ENCODE measurements at regions of chr11 and their contacts with region 1.

Region 1: DNA sequence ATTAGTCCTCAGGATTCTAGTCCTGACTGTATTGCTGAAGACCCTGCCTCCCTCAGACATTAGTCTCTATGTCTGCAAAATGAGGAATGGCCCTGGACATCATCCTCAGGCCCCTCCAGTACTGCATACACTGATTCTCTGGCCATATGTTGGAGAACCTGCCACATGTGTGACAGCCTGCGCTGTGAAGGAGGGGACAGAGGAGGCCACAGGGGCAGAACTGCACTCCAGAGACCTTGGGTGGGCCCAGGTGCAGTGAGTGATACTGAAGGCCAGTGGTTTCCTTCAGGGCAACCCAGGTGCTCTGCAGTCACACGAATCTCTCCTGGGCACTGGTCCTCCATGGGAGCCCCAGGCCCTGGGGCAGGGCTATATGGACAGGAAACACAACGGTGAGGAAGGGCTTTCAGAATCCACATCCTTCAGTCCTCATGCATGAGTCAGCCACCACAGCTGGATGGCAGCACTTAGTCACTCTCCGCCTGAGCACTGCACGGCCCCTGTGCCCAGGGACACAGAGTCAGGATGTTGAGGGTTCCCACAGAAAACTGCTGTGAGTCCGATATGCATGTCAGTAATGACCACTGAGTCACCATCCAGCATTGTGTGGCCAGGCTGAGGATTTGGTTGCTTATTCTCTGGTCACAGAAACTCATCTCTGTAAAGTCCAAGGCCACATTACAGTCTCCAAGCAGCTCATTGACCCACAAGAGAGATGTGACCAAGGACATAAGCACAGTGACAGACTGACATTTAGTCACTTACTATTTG is 39.7 kb downstream of the ME3 start:
- DNase-seq: peak; percentile 61
- H3K4me3 Mint-ChIP-seq: no peak overlapping the region
- H3K27ac Mint-ChIP-seq: no peak overlapping the region
- H3K4me1 Mint-ChIP-seq: peaks cover 6% of the 10 kb centered on the region
- H3K27me3 Mint-ChIP-seq: no peaks in the 10 kb centered on the region

Region 2: DNA sequence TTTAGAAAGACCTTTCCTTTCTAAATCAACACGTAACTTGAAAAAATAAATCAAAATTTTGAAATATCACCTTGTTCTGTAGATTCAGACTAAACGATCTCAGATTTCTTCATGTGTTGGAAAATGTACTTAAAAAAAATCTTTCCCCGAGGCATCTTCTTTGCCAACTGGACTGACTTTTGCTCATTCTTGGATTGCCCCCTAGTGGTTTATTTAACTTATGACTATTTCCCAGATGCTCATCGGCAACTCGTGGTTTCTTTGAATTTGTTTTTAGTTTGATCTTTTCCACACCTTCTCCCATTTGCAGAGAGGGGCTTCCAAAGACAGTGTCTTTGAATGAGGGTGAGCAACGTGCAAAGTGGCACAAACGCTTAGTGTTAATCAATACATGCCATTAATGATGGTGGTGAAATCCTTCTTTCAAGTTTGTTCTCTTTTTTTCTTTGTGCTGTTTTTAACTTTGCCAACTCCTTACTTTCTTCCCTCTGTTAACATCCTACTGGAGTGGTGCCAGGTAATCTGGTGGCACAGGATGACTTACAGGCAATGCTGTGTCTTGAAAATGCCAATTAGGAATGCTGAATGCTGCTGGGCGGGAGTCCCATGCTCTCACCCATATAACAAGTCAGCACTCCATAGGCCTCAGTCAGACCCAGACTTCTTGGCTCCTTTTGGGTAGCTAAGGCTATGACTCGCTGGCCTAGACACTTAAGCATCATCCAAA is 185.9 kb after region 1 on chr11:
- CTCF ChIA-PET with region 1: no interaction called
- intact Hi-C with region 1: loop called (anchors 1 kb)
- DNase-seq: no peak
- H3K4me3 Mint-ChIP-seq: no peak overlapping the region
- H3K27ac Mint-ChIP-seq: no peak overlapping the region
- H3K4me1 Mint-ChIP-seq: peaks cover 4% of the 10 kb centered on the region
- H3K27me3 Mint-ChIP-seq: peaks cover 21% of the 10 kb centered on the region